ENCODE measurements at regions of chr10 and their contacts with region 1.

Region 1: GRCh38 chr10:102782673-102783551 is 39.2 kb downstream of the WBP1L start:
- DNase-seq: peak; percentile 96
- H3K4me3 ChIP-seq: no peak overlapping the region
- H3K27ac ChIP-seq: peak overlapping the region; percentile 57
- H3K4me1 ChIP-seq: peaks cover 48% of the 10 kb centered on the region
- H3K27me3 ChIP-seq: no peaks in the 10 kb centered on the region
- CTCF ChIP-seq: no peak

Region 2: DNA sequence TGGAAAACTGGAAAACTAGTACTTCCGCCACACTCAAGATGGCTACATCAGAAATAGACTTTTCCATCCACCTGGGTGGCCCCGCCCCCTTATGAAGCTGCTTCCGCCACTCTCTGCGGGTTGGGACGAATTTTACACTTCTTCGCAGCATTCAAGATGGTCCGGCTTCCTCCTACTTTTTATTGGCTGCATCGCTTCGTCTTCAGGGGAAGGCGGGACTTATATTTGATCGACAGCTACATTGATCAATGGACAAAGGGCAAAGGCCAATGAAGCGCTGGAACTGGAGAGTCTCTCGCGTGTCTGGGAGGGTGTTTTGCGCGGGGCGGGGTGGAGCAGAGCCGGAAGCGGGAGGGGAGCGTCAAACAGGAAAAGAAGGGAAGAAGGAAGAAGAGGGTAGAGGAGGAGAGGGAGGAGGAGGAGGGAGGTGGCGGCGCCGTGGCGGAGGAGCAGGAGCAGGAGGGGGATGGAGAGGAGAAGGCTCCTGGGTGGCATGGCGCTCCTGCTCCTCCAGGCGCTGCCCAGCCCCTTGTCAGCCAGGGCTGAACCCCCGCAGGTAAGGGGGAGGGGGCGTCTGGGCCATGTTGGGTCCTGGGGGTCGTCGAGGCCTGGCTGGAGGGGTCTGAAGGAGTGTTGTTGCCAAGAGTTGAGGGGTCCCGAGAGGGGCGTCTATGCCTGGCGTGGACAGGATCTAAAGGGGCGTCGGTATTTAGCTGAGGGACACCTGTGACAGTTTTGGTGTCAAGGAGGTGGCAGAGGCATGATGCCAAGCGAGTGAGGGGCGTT is 39.1 kb before region 1 on chr10 and contains the start of gene WBP1L:
- CTCF ChIA-PET with region 1: no interaction called
- dilution Hi-C with region 1: no loop called
- in situ Hi-C with region 1: no loop called
- intact Hi-C with region 1: loop called (anchors 5 kb)
- DNase-seq: peak; percentile 100
- H3K4me3 ChIP-seq: peak within 1 kb of the TSS; percentile 75 to 98 (median 88)
- H3K27ac ChIP-seq: peak within 1 kb of the TSS; percentile 45
- H3K4me1 ChIP-seq: peaks cover 6% of the 10 kb centered on the region
- H3K27me3 ChIP-seq: no peaks in the 10 kb centered on the region
- CTCF ChIP-seq: no peak
- total RNA-seq, gene WBP1L: 18.4 to 48.2 TPM

Region 3: GRCh38 chr10:102752934-102753664 is 29.8 kb before region 1 on chr10:
- CTCF ChIA-PET with region 1: no interaction called
- dilution Hi-C with region 1: no loop called
- in situ Hi-C with region 1: no loop called
- intact Hi-C with region 1: loop called (anchors 1 kb)
- DNase-seq: peak; percentile 37
- H3K4me3 ChIP-seq: no peak overlapping the region
- H3K27ac ChIP-seq: no peak overlapping the region
- H3K4me1 ChIP-seq: no peaks in the 10 kb centered on the region
- H3K27me3 ChIP-seq: no peaks in the 10 kb centered on the region
- CTCF ChIP-seq: peak; percentile 52 to 77

Region 4: DNA sequence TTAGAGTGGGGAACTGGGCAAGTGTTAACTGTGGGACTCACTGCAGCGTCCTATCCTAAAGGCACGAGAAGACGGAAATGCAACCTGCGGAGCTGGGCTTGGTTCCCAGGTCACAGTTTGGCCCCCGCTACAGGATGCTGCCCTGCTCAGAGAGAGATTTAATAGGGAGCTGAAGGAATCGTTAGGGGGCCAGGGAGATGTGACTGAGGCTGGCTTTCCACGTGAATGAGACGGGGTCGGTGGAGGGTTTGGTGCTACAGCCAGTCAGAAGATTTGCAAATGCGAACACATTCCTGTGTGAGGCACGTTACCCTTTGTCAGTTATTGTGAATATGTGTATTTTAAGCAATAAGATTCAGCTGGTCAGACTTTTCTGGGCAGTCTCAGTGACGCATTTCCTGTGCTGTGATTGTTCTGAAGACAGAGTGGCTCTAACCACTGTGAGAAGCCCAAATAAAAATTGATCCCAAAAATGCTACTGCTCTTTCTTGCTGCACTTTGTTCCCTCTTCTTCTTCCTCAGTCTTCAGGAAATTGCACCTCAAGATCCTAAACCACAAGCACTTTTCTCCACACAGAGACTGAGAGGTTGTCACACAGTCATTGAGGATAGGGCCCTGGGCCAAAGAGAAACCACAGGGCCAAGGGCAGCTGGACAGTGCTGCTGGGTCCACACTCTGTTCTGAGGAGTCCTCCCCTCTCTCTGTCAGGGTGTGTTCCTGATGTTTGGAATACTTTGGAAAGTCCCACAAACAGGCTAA is 33.1 kb after region 1 on chr10:
- CTCF ChIA-PET with region 1: no interaction called
- dilution Hi-C with region 1: no loop called
- in situ Hi-C with region 1: no loop called
- intact Hi-C with region 1: loop called (anchors 5 kb)
- DNase-seq: no peak
- H3K4me3 ChIP-seq: no peak overlapping the region
- H3K27ac ChIP-seq: no peak overlapping the region
- H3K4me1 ChIP-seq: no peaks in the 10 kb centered on the region
- H3K27me3 ChIP-seq: no peaks in the 10 kb centered on the region
- CTCF ChIP-seq: no peak

Region 5: DNA sequence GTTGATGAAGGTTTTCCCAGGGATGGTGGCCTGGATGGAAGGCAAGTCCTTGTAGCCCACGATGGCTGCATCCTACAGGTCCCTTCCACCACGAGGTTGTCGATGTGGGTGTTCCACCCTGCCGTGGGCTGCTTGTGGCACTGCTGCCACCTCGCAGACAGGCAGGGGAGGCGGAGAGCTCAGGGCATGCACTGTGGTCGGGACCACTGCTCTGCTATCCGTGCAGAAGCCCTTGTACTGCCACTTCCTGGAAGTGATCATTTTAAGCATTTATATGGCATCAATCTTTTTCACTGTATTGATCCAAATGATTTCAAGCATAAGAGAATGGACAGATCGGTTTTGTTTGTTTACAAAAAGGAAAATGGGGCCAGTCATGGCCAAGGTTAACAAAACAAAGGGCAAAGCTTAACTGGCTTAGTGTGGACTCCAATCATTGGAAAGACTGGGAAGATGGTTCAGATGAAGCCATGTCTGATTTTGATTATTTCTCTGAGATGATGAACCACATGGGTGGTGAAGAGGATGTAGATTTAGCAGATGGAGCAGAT is 62.5 kb after region 1 on chr10:
- CTCF ChIA-PET with region 1: no interaction called
- dilution Hi-C with region 1: loop called (anchors 5 kb)
- in situ Hi-C with region 1: no loop called
- intact Hi-C with region 1: no loop called
- DNase-seq: no peak
- H3K4me3 ChIP-seq: no peak overlapping the region
- H3K27ac ChIP-seq: no peak overlapping the region
- H3K4me1 ChIP-seq: no peaks in the 10 kb centered on the region
- H3K27me3 ChIP-seq: no peaks in the 10 kb centered on the region
- CTCF ChIP-seq: no peak

Measured in mammary epithelial cell (primary cell).